ENCODE measurements at regions of chr1 and their contacts with region 1.

Region 1: GRCh38 chr1:221394011-221394544 is 347.8 kb downstream of the DUSP10 start:
- DNase-seq: no peak

Region 2: GRCh38 chr1:221217029-221217428 is 177.0 kb before region 1 on chr1:
- intact Hi-C with region 1: loop called (anchors 5 kb)
- DNase-seq: no peak